K562 (cell line): ENCODE measurements at regions of chr12 and their contacts with region 1.

Region 1: GRCh38 chr12:46372544-46373110 is at the start of gene SLC38A2:
- DNase-seq: peak; percentile 94 to 97 (median 96)
- ATAC-seq: peak; percentile 90
- H3K4me3 ChIP-seq: peak within 1 kb of the TSS; percentile 74
- H3K27ac ChIP-seq: peak within 1 kb of the TSS; percentile 88
- H3K4me1 ChIP-seq: peaks cover 16 to 45% of the 10 kb centered on the region in 2 experiments
- H3K27me3 ChIP-seq: no peaks in the 10 kb centered on the region
- CTCF ChIP-seq: 0 out of 6 replicates have a peak, but pooled peaks of 1 of the 3 experiments have one; percentile 0
- EP300 ChIP-seq: no peak
- POLR2A ChIP-seq: peak; percentile 99
- RAD21 ChIP-seq: peak in 1 of 2 experiments; percentile 6; a peak in 1 of 4 replicates
- polyA plus RNA-seq, gene SLC38A2: 98.7 to 132 TPM

Region 2: DNA sequence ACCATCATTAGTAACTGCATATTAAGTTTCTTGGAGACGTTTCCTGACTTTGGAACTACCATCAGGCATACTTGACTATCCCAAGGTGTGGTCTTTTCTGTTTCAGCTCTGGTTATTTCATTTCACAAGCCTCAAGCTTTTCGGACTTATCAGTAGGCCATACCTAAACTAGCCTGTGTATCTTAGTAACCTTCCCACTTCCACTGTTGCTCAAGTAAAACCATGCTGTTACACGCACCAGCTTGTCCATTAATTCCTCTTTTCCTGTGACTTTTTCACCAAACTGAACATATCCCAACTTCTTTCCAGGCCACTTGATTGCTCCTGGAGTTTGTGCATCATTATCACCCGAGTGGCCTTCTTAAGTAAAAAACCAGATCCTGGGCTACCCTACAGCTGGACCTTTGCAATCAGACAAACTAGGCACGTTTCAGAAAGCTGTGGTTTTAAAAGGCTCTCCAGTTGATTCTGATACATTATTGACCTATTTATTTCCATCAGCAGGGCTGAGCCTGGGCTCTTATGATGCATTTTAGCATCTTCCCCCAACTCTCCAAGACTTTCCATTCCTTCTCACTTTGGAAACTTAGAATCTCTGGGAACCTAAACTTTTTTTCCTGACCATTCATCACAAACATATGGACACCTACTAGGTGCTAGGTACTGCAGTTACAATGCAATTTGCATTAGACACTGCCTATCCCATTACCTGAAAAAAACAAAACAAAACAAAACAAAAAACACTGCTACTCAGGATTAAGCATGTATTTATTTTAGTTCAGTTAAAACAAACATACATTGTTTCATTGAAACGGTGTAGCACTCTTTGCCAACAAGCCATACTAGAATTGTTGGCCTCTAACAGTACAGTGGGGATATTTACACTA is 14.9 kb before region 1 on chr12:
- CTCF ChIA-PET with region 1: no interaction called
- POLR2A ChIA-PET with region 1: interaction called, 90 read pairs
- in situ Hi-C with region 1: no loop called
- intact Hi-C with region 1: no loop called
- DNase-seq: no peak
- ATAC-seq: peak; percentile 72
- H3K4me3 ChIP-seq: no peak overlapping the region
- H3K27ac ChIP-seq: no peak overlapping the region
- H3K4me1 ChIP-seq: no peaks in the 10 kb centered on the region
- H3K27me3 ChIP-seq: no peaks in the 10 kb centered on the region
- CTCF ChIP-seq: no peak
- EP300 ChIP-seq: no peak
- POLR2A ChIP-seq: peak; percentile 76
- RAD21 ChIP-seq: 0 out of 4 replicates have a peak, but pooled peaks of 1 of the 2 experiments have one; percentile 1

Region 3: DNA sequence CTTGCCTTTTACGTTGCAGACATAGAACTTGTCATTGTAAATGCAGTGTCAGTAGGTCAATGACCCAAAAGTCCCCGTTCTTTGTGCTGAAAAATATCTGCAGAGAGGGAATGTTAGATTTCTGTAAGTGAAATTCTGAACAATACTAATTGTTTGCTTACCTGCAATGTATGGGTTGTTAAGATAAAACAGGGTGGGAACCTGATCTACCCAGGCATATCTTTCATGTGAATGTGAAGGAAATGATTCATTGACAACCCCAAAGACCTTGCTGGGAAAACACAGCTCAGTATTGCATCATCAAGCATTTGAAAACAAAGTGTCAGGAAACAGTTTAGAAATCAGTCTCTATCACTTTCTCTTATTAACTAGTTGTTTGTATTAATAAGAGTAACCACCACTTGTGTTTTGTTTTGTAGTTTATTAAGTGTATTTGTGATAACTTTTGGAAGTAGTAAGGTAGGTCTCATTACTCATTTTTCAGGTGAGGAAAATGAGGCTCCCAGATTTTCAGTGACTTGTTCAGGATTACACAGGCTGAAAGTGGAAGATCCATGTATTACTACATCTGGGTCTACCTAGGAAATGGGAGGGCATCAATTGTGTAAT is 57.8 kb after region 1 on chr12:
- CTCF ChIA-PET with region 1: no interaction called
- POLR2A ChIA-PET with region 1: interaction called, 7 read pairs
- in situ Hi-C with region 1: no loop called
- intact Hi-C with region 1: loop called (anchors 2 kb)
- DNase-seq: peak; percentile 24 to 77 (median 47)
- ATAC-seq: peak; percentile 79
- H3K4me3 ChIP-seq: no peak overlapping the region
- H3K27ac ChIP-seq: peak overlapping the region; percentile 59
- H3K4me1 ChIP-seq: peaks cover 13 to 37% of the 10 kb centered on the region in 2 experiments
- H3K27me3 ChIP-seq: no peaks in the 10 kb centered on the region
- CTCF ChIP-seq: no peak
- EP300 ChIP-seq: peak; percentile 96
- POLR2A ChIP-seq: no peak
- RAD21 ChIP-seq: no peak; a peak in 2 of 4 replicates

Region 4: GRCh38 chr12:46450279-46450748 is 77.7 kb after region 1 on chr12:
- CTCF ChIA-PET with region 1: no interaction called
- POLR2A ChIA-PET with region 1: interaction called, 4 read pairs
- in situ Hi-C with region 1: no loop called
- intact Hi-C with region 1: loop called (anchors 5 kb)
- DNase-seq: peak; percentile 28 to 81 (median 40)
- ATAC-seq: peak; percentile 82
- H3K4me3 ChIP-seq: no peak overlapping the region; the same call in 1 of the 2 replicates
- H3K27ac ChIP-seq: peak overlapping the region; percentile 64; the same call in 2 of the 3 replicates
- H3K4me1 ChIP-seq: peaks cover 10 to 43% of the 10 kb centered on the region in 2 experiments
- H3K27me3 ChIP-seq: no peaks in the 10 kb centered on the region
- CTCF ChIP-seq: no peak
- EP300 ChIP-seq: no peak; the same call in 1 of the 2 replicates
- POLR2A ChIP-seq: no peak
- RAD21 ChIP-seq: no peak

Region 5: GRCh38 chr12:46556105-46556559 is 183.5 kb after region 1 on chr12:
- CTCF ChIA-PET with region 1: no interaction called
- POLR2A ChIA-PET with region 1: no interaction called
- in situ Hi-C with region 1: no loop called
- intact Hi-C with region 1: loop called (anchors 5 kb)
- DNase-seq: no peak
- ATAC-seq: no peak
- H3K4me3 ChIP-seq: no peak overlapping the region
- H3K27ac ChIP-seq: no peak overlapping the region
- H3K4me1 ChIP-seq: peaks cover 3 to 34% of the 10 kb centered on the region in 2 experiments; a peak in 4 of 5 replicates
- H3K27me3 ChIP-seq: no peaks in the 10 kb centered on the region
- CTCF ChIP-seq: no peak
- EP300 ChIP-seq: no peak
- POLR2A ChIP-seq: no peak
- RAD21 ChIP-seq: no peak

Region 6: GRCh38 chr12:47797441-47797840 is 1424.8 kb after region 1 on chr12:
- CTCF ChIA-PET with region 1: no interaction called
- POLR2A ChIA-PET with region 1: no interaction called
- in situ Hi-C with region 1: no loop called
- intact Hi-C with region 1: no loop called
- DNase-seq: no peak
- ATAC-seq: peak; percentile 65
- H3K4me3 ChIP-seq: no peak overlapping the region
- H3K27ac ChIP-seq: no peak overlapping the region
- H3K4me1 ChIP-seq: peaks cover 0 to 30% of the 10 kb centered on the region in 2 experiments; a peak in 3 of 5 replicates
- H3K27me3 ChIP-seq: no peaks in the 10 kb centered on the region
- CTCF ChIP-seq: peak in 2 of 3 experiments; percentile 43 to 56; a peak in 5 of 6 replicates
- EP300 ChIP-seq: no peak
- POLR2A ChIP-seq: no peak
- RAD21 ChIP-seq: peak; percentile 27 to 58